ENCODE measurements at regions of chr2 and their contacts with region 1.

Region 1: GRCh38 chr2:15517793-15518192 is 43.3 kb downstream of the NBAS start:
- DNase-seq: no peak
- H3K4me3 ChIP-seq: no peak overlapping the region
- H3K27ac ChIP-seq: no peak overlapping the region
- H3K4me1 ChIP-seq: no peaks in the 10 kb centered on the region
- CTCF ChIP-seq: no peak

Region 2: DNA sequence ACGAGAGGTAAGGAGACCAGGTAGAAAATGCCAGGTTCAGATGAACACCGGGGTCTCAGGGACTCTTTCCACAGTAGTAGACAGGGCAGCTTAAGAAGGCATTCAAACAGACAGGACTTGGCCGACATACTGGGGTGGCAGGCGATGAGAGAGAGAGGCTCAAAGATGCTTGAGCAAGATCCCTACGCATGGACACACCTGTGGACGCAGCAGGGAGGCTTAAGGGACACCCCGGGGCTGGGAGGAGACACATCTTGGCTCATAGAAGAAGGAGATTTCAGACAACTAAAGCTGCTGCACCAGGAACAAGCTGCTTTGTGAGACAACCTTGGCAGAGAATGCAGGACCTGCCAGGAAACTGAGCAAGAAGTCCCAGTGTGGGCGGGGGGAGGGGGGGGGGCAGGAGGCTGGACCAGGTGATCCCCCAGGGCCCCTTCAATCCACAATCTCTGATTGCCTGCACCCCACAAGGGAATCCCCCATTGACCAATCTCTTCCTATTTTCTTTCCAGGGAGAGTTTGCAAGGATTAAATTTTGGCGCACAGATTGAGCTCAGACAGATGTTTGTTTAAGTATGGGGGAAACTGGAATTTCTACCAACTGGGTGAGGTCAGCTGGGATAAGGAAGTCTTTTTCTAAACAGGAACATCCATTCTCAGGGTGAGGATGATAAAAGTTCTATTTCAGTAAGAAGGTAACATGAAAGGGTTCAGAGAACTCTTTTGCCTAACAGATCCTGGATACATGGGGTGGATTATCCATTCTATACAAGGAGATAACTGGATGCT is 357.4 kb before region 1 on chr2:
- CTCF ChIA-PET with region 1: no interaction called
- POLR2A ChIA-PET with region 1: no interaction called
- intact Hi-C with region 1: no loop called
- DNase-seq: no peak
- H3K4me3 ChIP-seq: no peak overlapping the region
- H3K27ac ChIP-seq: no peak overlapping the region
- H3K4me1 ChIP-seq: peaks cover 7% of the 10 kb centered on the region
- CTCF ChIP-seq: no peak

Region 3: DNA sequence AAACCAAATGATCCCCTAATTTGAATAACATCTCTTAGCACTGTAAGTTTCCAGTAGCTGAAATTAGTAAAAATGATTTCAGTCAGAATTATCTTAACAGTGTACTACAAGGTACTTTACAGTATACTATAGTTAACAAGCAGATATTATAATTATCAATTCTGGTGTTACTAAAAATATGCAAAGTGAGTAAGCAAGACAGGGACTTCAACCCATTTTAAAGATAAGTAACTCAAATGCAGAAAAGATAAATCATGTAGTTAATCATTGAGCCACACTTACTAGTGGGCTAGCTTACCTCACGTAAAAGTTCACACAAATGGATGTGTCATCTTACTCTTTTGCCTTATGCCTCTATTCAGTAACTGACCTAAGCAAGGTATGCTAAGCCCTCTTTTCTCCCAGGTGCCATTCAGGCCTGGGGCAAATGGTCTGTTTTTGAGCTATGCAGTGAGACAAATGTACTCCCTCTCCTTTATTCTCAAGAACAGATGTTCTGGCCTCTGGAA is 57.6 kb before region 1 on chr2:
- CTCF ChIA-PET with region 1: no interaction called
- POLR2A ChIA-PET with region 1: no interaction called
- intact Hi-C with region 1: no loop called
- DNase-seq: no peak
- H3K4me3 ChIP-seq: no peak overlapping the region
- H3K27ac ChIP-seq: no peak overlapping the region
- H3K4me1 ChIP-seq: peaks cover 12% of the 10 kb centered on the region
- CTCF ChIP-seq: no peak

Region 4: DNA sequence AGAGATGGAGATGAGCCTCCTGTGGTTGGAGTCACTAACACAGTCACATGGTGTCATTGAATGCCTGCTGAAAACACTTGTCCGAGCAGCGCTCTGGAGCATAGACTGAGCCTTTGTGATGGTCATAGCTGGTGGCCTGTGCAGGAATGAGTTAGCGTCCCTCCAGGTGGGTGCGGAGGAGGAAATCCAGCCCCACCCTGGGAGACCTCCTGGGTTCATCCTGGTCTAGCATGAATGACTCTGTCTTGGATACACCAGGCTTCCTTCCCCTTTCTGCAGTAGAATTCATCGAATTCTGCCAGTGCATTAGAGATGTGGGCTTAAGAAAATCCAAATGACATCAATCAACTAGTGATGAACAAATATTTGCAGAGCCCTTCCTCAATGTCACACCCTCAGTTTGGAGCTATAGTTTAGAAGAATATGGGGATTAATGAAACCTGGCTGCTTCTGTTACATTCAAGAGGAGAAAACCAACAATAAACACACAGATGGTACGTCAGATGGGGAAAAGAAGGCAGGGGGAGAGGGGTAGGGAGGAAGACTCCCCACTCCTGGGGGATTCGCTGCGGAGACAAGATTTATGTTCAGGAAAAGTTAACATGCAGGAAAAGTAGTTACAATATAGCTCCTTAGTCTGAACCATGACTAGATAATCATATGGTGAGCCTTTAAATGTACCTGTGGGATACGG is 210.6 kb after region 1 on chr2:
- CTCF ChIA-PET with region 1: no interaction called
- POLR2A ChIA-PET with region 1: interaction called, 10 read pairs
- intact Hi-C with region 1: no loop called
- DNase-seq: no peak
- H3K4me3 ChIP-seq: no peak overlapping the region
- H3K27ac ChIP-seq: no peak overlapping the region
- H3K4me1 ChIP-seq: peaks cover 10% of the 10 kb centered on the region
- CTCF ChIP-seq: no peak